ENCODE measurements at regions of chr4 and their contacts with region 1.

Region 1: GRCh38 chr4:24690436-24690835 is 104.9 kb upstream of the SOD3 start:
- DNase-seq: no peak
- ATAC-seq: peak in 2 of 4 donors; percentile 19 to 25
- H3K4me3 ChIP-seq: no peak overlapping the region
- H3K27ac ChIP-seq: no peak overlapping the region
- H3K4me1 ChIP-seq: no peaks in the 10 kb centered on the region
- H3K27me3 ChIP-seq: no peaks in the 10 kb centered on the region
- CTCF ChIP-seq: no peak

Region 2: GRCh38 chr4:24137963-24138601 is 552.4 kb before region 1 on chr4:
- intact Hi-C with region 1: no loop called
- DNase-seq: no peak
- ATAC-seq: peak in 1 of 4 donors; percentile 32
- H3K4me3 ChIP-seq: no peak overlapping the region
- H3K27ac ChIP-seq: no peak overlapping the region
- H3K4me1 ChIP-seq: no peaks in the 10 kb centered on the region
- H3K27me3 ChIP-seq: no peaks in the 10 kb centered on the region
- CTCF ChIP-seq: no peak

Region 3: GRCh38 chr4:24488399-24489164 is 201.9 kb before region 1 on chr4:
- intact Hi-C with region 1: loop called in 2 of 3 experiments (anchors 10 kb)
- DNase-seq: peak; percentile 57 to 95 (median 80)
- ATAC-seq: peak; percentile 92 to 99 (median 94)
- H3K4me3 ChIP-seq: no peak overlapping the region
- H3K27ac ChIP-seq: no peak overlapping the region
- H3K4me1 ChIP-seq: no peaks in the 10 kb centered on the region
- H3K27me3 ChIP-seq: no peaks in the 10 kb centered on the region
- CTCF ChIP-seq: peak; percentile 84 to 88 (median 86)

Region 4: GRCh38 chr4:24584175-24584850 is 106.1 kb before region 1 on chr4 and contains the start of gene DHX15:
- intact Hi-C with region 1: no loop called
- DNase-seq: peak; percentile 95 to 98 (median 95)
- ATAC-seq: peak; percentile 95 to 98 (median 96)
- H3K4me3 ChIP-seq: peak within 1 kb of the TSS; percentile 75 to 100 (median 96)
- H3K27ac ChIP-seq: peak within 1 kb of the TSS; percentile 93 to 99 (median 95)
- H3K4me1 ChIP-seq: peaks cover 9 to 18% (median 12%) of the 10 kb centered on the region in 3 donors
- H3K27me3 ChIP-seq: no peaks in the 10 kb centered on the region
- CTCF ChIP-seq: no peak
- total RNA-seq, gene DHX15: 32.8 to 61.8 (median 46.0) TPM

Measured in pancreas (tissue), 10 donors.